Ascending aorta (tissue), 2 donors: ENCODE measurements at regions of chr14 and their contacts with region 1.

Region 1: DNA sequence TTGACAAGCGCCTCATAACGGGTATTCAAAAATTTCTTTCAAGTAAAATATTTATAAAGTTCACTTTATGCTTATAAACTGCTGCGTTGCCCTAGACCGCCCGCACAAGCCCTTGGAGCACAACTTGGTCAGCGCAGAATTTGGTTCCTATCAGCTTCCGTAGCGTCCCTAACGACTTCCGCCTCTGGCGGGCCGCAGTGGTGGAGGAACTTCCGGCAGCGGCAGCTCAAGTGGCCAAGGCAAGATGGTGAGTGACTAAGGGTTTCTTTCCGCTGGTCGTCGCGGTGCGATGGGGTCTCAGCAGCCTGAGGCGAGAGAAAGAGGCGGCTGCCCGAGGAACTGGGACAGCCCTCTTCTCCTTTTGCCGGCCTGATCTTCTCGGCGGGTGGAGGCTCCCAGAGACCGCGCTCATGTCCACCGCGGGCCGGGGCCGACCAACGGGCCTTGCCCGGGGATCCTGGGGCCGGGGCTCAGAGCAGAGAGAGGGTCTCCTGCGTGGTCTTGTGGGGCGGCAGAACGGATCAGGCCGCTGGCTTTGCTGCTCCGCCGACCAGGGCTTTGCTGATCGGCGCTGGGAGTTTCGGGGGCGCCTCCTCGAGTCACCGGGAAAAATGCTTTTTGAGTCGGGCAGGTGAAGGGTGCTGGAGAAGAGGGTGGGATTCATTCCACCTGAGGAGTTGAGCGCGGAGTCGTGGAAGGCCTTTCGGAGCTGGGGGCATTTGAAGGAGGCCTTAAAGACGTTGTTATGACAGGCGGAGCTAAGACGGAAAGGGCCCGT is at the start of gene PSMC1:
- DNase-seq: peak; percentile 63 to 95
- H3K4me3 ChIP-seq: peak within 1 kb of the TSS; percentile 92 to 99
- H3K27ac ChIP-seq: peak within 1 kb of the TSS; percentile 90 to 93
- H3K4me1 ChIP-seq: peaks cover 0 to 4% of the 10 kb centered on the region in 2 donors
- H3K27me3 ChIP-seq: no peaks in the 10 kb centered on the region
- CTCF ChIP-seq: peak in 1 of 3 experiments; percentile 2
- total RNA-seq, gene PSMC1: 93.2 TPM

Region 2: GRCh38 chr14:90301668-90302090 is 45.1 kb after region 1 on chr14:
- intact Hi-C with region 1: loop called (anchors 5 kb)
- DNase-seq: no peak
- H3K4me3 ChIP-seq: no peak overlapping the region
- H3K27ac ChIP-seq: peak overlapping the region; percentile 37 to 40
- H3K4me1 ChIP-seq: peaks cover 0 to 14% of the 10 kb centered on the region in 2 donors
- H3K27me3 ChIP-seq: no peaks in the 10 kb centered on the region
- CTCF ChIP-seq: peak in 2 of 3 experiments; percentile 52 to 63

Region 3: GRCh38 chr14:90426663-90427062 is 170.1 kb after region 1 on chr14:
- intact Hi-C with region 1: no loop called
- DNase-seq: no peak
- H3K4me3 ChIP-seq: no peak overlapping the region
- H3K27ac ChIP-seq: no peak overlapping the region
- H3K4me1 ChIP-seq: no peaks in the 10 kb centered on the region
- H3K27me3 ChIP-seq: no peaks in the 10 kb centered on the region
- CTCF ChIP-seq: no peak